B cell (primary cell): ENCODE measurements at regions of chr22 and their contacts with region 1.

Region 1: DNA sequence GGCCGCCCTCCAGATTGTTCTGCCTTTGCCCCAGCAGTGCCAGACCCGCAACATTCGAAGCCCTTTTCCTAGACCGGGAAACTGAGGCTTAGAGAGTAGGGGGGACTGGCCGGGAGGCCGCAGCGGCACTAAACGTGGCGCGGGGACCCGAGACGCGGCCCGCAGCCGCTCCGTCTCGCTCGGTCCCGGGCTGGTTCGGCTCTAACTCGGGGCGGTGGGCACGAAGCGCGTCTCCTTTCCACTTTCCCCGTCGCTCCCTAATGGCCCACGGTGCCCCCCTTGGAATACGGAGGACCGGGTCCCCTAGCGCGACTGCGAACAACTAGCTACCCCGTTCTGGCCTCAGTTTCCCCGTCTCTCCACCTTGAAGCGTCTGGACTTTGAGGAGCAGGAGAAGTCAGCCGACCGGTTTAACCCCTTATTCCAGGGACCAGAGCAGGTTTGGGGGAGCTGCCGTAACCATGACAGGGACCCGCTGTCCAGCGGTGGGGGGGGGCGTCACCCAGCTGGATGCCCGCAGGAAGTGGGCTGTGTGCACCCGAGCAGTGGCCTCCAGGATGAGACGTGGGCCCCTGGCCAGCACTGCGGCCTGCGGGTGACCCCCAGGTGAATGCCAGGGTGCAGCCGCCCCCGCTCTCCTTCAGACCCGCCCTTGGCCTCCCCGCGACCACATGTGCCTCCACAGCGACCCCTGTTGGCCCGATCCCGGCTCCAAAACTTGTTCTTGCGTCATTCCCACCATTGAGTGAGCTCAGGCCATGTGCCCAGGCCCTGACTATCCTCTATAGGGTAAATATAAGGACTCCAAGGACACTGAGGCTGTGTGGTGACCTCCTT is 1.1 kb downstream of the CDC42EP1 start:
- DNase-seq: peak; percentile 82
- ATAC-seq: peak; percentile 54
- H3K4me3 ChIP-seq: peak overlapping the region in 4 of 5 experiments; percentile 17 to 65 (median 39)
- H3K4me3 Mint-ChIP-seq: peak overlapping the region; percentile 78
- H3K27ac ChIP-seq: no peak overlapping the region
- H3K27ac Mint-ChIP-seq: peak overlapping the region; percentile 67
- H3K4me1 ChIP-seq: peaks cover 27 to 32% of the 10 kb centered on the region in 2 donors
- H3K4me1 Mint-ChIP-seq: peaks cover 26% of the 10 kb centered on the region
- H3K27me3 ChIP-seq: peaks cover 0 to 61% (median 25%) of the 10 kb centered on the region in 4 experiments
- H3K27me3 Mint-ChIP-seq: peaks cover 43% of the 10 kb centered on the region
- CTCF ChIP-seq: peak; percentile 77

Region 2: GRCh38 chr22:37519268-37520195 is 41.9 kb before region 1 on chr22 and contains the start of gene CARD10:
- CTCF ChIA-PET with region 1: no interaction called
- POLR2A ChIA-PET with region 1: no interaction called
- intact Hi-C with region 1: no loop called
- DNase-seq: peak; percentile 43
- ATAC-seq: peak; percentile 36
- H3K4me3 ChIP-seq: peak within 1 kb of the TSS in 3 of 5 experiments; percentile 41 to 49 (median 44)
- H3K4me3 Mint-ChIP-seq: peak within 1 kb of the TSS; percentile 74
- H3K27ac ChIP-seq: no peak within 1 kb of the TSS
- H3K27ac Mint-ChIP-seq: no peak within 1 kb of the TSS
- H3K4me1 ChIP-seq: peaks cover 5 to 10% of the 10 kb centered on the region in 2 donors
- H3K4me1 Mint-ChIP-seq: peaks cover 6% of the 10 kb centered on the region
- H3K27me3 ChIP-seq: peaks cover 0 to 49% (median 12%) of the 10 kb centered on the region in 4 experiments
- H3K27me3 Mint-ChIP-seq: peaks cover 55% of the 10 kb centered on the region
- CTCF ChIP-seq: no peak
- total RNA-seq, gene CARD10: not detected in 2 replicates

Region 3: DNA sequence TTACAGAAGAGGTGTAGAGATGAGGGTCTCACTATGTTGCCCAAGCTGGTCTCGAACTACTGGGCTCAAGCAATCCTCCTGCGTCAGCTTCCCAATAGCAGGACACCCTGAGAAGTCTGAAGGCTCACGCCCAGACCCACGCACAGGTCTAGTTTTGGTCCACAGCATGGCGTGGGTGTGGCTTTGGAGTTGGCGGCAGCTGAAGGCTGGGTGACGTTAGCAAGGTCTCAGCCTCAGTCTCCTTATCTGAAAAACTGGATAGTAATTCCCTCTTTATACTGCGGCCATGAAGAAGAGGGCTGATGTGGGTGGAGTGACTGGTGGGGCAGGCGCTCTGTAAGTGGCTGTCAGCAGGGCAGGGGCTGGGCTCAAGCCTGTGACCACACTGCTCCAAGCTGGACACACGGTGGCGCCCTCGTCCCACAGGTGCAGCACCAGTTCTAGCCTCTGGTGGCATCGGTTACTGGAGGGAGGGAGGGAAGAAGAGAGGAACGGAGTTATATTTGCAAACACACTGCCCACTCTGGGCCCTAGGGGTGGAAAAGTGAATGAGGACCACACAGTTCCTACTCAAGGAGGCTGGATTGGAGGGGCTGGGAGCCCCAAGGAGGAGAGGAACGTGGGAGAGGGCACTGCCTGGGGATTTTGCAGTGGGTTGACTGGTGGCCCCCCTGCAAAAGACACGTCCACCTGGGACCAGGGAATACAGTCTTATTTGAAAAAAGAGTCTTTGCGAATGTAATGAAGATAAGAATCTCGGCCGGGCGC is 22.7 kb before region 1 on chr22:
- CTCF ChIA-PET with region 1: interaction called, 278 read pairs
- POLR2A ChIA-PET with region 1: interaction called, 12 read pairs
- intact Hi-C with region 1: no loop called
- DNase-seq: peak; percentile 90
- ATAC-seq: peak; percentile 100
- H3K4me3 ChIP-seq: no peak overlapping the region
- H3K4me3 Mint-ChIP-seq: peak overlapping the region; percentile 32
- H3K27ac ChIP-seq: no peak overlapping the region
- H3K27ac Mint-ChIP-seq: peak overlapping the region; percentile 21
- H3K4me1 ChIP-seq: peaks cover 20 to 29% of the 10 kb centered on the region in 2 donors
- H3K4me1 Mint-ChIP-seq: peaks cover 24% of the 10 kb centered on the region
- H3K27me3 ChIP-seq: peaks cover 0 to 6% (median under 1%) of the 10 kb centered on the region in 4 experiments
- H3K27me3 Mint-ChIP-seq: peaks cover 22% of the 10 kb centered on the region
- CTCF ChIP-seq: peak; percentile 98

Region 4: GRCh38 chr22:37575490-37576003 is 14.1 kb after region 1 on chr22:
- CTCF ChIA-PET with region 1: interaction called, 10 read pairs
- POLR2A ChIA-PET with region 1: interaction called, 12 read pairs
- intact Hi-C with region 1: no loop called
- DNase-seq: no peak
- ATAC-seq: no peak
- H3K4me3 ChIP-seq: no peak overlapping the region
- H3K4me3 Mint-ChIP-seq: no peak overlapping the region
- H3K27ac ChIP-seq: no peak overlapping the region
- H3K27ac Mint-ChIP-seq: no peak overlapping the region
- H3K4me1 ChIP-seq: peaks cover 8 to 11% of the 10 kb centered on the region in 2 donors
- H3K4me1 Mint-ChIP-seq: peaks cover 5% of the 10 kb centered on the region
- H3K27me3 ChIP-seq: no peaks in the 10 kb centered on the region
- H3K27me3 Mint-ChIP-seq: peaks cover 13% of the 10 kb centered on the region
- CTCF ChIP-seq: no peak

Region 5: DNA sequence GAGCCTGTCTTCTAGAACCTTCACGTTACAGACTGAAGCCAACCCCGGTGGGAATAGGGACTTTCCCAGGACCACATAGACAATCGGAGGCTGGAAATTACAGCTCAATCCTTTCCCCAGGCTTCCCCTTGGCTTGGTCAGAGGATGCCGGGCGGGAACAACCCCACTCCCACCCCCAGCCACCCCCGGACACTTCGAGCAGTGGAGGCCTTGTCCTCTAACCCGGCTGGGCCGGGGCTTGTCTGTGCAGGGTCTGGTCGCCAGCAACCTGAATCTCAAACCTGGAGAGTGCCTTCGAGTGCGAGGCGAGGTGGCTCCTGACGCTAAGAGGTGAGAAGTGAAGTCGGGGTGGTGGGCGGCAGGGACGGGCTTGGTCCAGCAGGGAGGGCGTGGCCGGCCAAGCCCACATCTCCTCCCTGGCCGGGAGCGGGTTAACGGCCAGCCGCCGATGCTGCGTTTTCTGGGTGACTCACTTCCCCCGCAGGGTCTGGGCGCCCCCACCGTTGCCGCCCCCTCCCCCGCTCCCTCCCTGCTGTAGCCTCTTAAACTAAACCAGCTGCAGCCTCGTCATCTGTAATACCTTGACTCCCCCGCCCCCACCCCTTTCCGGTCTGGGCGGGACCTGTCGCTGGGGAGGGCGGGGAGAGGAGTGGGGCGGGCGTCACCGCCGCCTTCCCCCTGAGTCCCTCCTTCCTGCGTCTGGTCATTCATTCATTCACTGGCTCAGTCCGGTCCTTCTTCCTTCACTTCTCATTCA is 115.5 kb after region 1 on chr22:
- CTCF ChIA-PET with region 1: no interaction called
- POLR2A ChIA-PET with region 1: no interaction called
- intact Hi-C with region 1: no loop called
- DNase-seq: peak; percentile 95
- ATAC-seq: peak; percentile 83
- H3K4me3 ChIP-seq: peak overlapping the region; percentile 73 to 92 (median 81)
- H3K4me3 Mint-ChIP-seq: peak overlapping the region; percentile 96
- H3K27ac ChIP-seq: peak overlapping the region; percentile 98
- H3K27ac Mint-ChIP-seq: peak overlapping the region; percentile 97
- H3K4me1 ChIP-seq: peaks cover 34 to 63% of the 10 kb centered on the region in 2 donors
- H3K4me1 Mint-ChIP-seq: peaks cover 56% of the 10 kb centered on the region
- H3K27me3 ChIP-seq: no peaks in the 10 kb centered on the region
- H3K27me3 Mint-ChIP-seq: no peaks in the 10 kb centered on the region
- CTCF ChIP-seq: no peak